Activated CD4-positive, alpha-beta memory T cell treated with anti-CD3 and anti-CD28 coated beads for 36 hours (primary cell): ENCODE measurements at regions of chr10 and their contacts with region 1.

Region 1: GRCh38 chr10:35126530-35127296 is at the start of gene CREM:
- DNase-seq: peak; percentile 100
- H3K4me3 Mint-ChIP-seq: peak within 1 kb of the TSS; percentile 86
- H3K27ac Mint-ChIP-seq: peak within 1 kb of the TSS; percentile 95
- H3K4me1 Mint-ChIP-seq: peaks cover 53% of the 10 kb centered on the region
- H3K27me3 Mint-ChIP-seq: no peaks in the 10 kb centered on the region
- total RNA-seq, gene CREM: 160 to 164 TPM

Region 2: GRCh38 chr10:34994565-34995142 is 132.1 kb before region 1 on chr10:
- CTCF ChIA-PET with region 1: interaction called, 10 read pairs
- POLR2A ChIA-PET with region 1: no interaction called
- intact Hi-C with region 1: loop called (anchors 2 kb)
- DNase-seq: peak; percentile 69
- H3K4me3 Mint-ChIP-seq: no peak overlapping the region
- H3K27ac Mint-ChIP-seq: no peak overlapping the region
- H3K4me1 Mint-ChIP-seq: peaks cover 11% of the 10 kb centered on the region
- H3K27me3 Mint-ChIP-seq: no peaks in the 10 kb centered on the region

Region 3: GRCh38 chr10:35153716-35154479 is 27.2 kb after region 1 on chr10:
- CTCF ChIA-PET with region 1: interaction called, 27 read pairs
- POLR2A ChIA-PET with region 1: interaction called, 33 read pairs
- intact Hi-C with region 1: loop called (anchors 1 kb)
- DNase-seq: no peak
- H3K4me3 Mint-ChIP-seq: no peak overlapping the region
- H3K27ac Mint-ChIP-seq: no peak overlapping the region
- H3K4me1 Mint-ChIP-seq: peaks cover 48% of the 10 kb centered on the region
- H3K27me3 Mint-ChIP-seq: no peaks in the 10 kb centered on the region

Region 4: GRCh38 chr10:35218339-35218955 is 91.7 kb after region 1 on chr10:
- CTCF ChIA-PET with region 1: interaction called, 211 read pairs
- POLR2A ChIA-PET with region 1: interaction called, 18 read pairs
- intact Hi-C with region 1: loop called (anchors 1 kb)
- DNase-seq: peak; percentile 90
- H3K4me3 Mint-ChIP-seq: peak overlapping the region; percentile 43
- H3K27ac Mint-ChIP-seq: peak overlapping the region; percentile 81
- H3K4me1 Mint-ChIP-seq: peaks cover 48% of the 10 kb centered on the region
- H3K27me3 Mint-ChIP-seq: no peaks in the 10 kb centered on the region

Region 5: GRCh38 chr10:35336084-35336831 is 209.5 kb after region 1 on chr10 and contains the start of gene CCNY:
- CTCF ChIA-PET with region 1: interaction called, 4 read pairs
- POLR2A ChIA-PET with region 1: interaction called, 6 read pairs
- intact Hi-C with region 1: loop called (anchors 2 kb)
- DNase-seq: peak; percentile 85
- H3K4me3 Mint-ChIP-seq: peak within 1 kb of the TSS; percentile 86
- H3K27ac Mint-ChIP-seq: peak within 1 kb of the TSS; percentile 87
- H3K4me1 Mint-ChIP-seq: peaks cover 68% of the 10 kb centered on the region
- H3K27me3 Mint-ChIP-seq: no peaks in the 10 kb centered on the region
- total RNA-seq, gene CCNY: 34.6 to 36.2 TPM

Region 6: GRCh38 chr10:35563261-35563891 is 436.7 kb after region 1 on chr10:
- CTCF ChIA-PET with region 1: interaction called, 21 read pairs
- POLR2A ChIA-PET with region 1: no interaction called
- intact Hi-C with region 1: loop called (anchors 10 kb)
- DNase-seq: peak; percentile 61
- H3K4me3 Mint-ChIP-seq: no peak overlapping the region
- H3K27ac Mint-ChIP-seq: no peak overlapping the region
- H3K4me1 Mint-ChIP-seq: no peaks in the 10 kb centered on the region
- H3K27me3 Mint-ChIP-seq: no peaks in the 10 kb centered on the region